ENCODE measurements at regions of chr6 and their contacts with region 1.

Region 1: GRCh38 chr6:13328076-13328874 is at the start of gene TBC1D7:
- DNase-seq: peak; percentile 92
- H3K4me3 Mint-ChIP-seq: peak within 1 kb of the TSS; percentile 88
- H3K27ac Mint-ChIP-seq: peak within 1 kb of the TSS; percentile 79
- H3K4me1 Mint-ChIP-seq: no peaks in the 10 kb centered on the region
- H3K27me3 Mint-ChIP-seq: no peaks in the 10 kb centered on the region
- CTCF ChIP-seq: no peak
- total RNA-seq, gene TBC1D7: 19.5 and 28.5 TPM in 2 replicates

Region 2: DNA sequence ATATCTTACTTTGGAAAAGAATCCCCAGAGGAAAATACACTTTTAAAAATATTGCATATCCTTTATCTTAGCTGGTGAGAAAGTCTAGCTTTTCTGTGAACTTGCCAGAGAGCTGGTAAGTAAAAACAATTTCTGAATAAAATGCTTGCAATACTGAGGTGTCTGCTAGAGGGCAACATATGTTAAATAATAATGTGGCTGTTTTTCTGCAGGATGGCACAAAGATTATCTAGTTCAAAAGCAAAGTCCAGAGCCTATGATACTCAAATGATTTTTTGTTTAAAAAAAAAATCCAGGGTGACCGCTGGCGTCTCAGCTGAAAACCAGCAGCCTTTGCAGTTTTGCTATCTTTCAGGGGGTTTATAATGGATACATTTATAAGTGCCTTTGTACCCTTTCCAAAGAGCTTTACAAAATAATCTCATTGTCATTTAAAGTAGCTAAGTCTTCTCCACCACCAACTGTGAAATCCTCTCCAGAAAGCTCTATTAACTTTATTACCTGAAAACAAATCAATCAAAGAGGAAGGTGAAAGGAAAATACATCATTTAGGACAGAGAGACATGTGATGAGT is 416.8 kb before region 1 on chr6:
- CTCF ChIA-PET with region 1: interaction called, 160 read pairs
- POLR2A ChIA-PET with region 1: interaction called, 6 read pairs
- intact Hi-C with region 1: loop called (anchors 1 kb)
- DNase-seq: peak; percentile 31
- H3K4me3 Mint-ChIP-seq: no peak overlapping the region
- H3K27ac Mint-ChIP-seq: no peak overlapping the region
- H3K4me1 Mint-ChIP-seq: no peaks in the 10 kb centered on the region
- H3K27me3 Mint-ChIP-seq: peaks cover 62% of the 10 kb centered on the region
- CTCF ChIP-seq: peak; percentile 40

Region 3: GRCh38 chr6:13229205-13230085 is 98.8 kb before region 1 on chr6:
- CTCF ChIA-PET with region 1: interaction called, 12 read pairs
- POLR2A ChIA-PET with region 1: interaction called, 5 read pairs
- intact Hi-C with region 1: loop called (anchors 1 kb)
- DNase-seq: peak; percentile 66
- H3K4me3 Mint-ChIP-seq: no peak overlapping the region
- H3K27ac Mint-ChIP-seq: no peak overlapping the region
- H3K4me1 Mint-ChIP-seq: peaks cover 11% of the 10 kb centered on the region
- H3K27me3 Mint-ChIP-seq: no peaks in the 10 kb centered on the region
- CTCF ChIP-seq: peak; percentile 48

Region 4: DNA sequence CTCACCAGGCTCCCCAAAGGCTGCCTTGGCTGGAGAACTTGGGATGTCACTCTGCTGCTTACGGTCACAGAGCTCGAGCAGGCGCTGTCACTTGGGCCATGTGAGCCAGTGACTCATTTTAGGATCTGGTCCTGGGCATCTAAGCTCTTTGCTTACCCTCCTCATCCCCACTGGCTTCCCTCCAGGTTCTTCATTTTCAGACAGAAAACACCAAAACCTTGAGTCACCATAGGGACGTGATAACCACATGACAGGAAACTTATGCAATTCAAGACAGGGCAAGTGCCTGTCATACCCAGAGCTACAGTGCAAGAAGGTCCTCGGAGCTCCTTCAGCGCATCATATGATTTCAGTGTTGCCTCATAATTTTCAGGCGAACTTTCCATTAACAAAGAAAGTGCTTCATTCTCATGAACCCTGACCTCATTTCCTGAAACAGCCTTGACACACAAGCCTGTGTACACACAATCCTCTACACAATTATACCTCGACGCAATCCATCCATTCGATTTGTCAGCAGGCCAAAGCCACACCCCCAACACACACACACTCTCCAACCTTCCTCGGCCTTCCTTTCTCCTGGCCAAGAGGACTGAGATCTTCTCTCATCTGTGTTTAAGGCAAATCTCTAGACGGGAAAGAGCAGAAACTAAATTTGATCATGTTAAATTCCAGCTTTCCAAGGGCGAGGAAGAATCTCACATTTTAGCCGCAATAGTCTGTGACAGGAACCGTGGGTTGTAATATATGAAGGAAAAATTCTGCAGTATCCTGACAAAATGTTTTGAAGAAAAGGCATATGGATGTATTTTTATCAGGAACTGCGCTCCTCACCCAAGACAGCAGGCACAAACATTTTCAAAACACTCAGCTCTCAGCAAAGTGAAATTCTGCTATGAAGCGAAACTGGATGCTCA is 25.3 kb before region 1 on chr6:
- CTCF ChIA-PET with region 1: interaction called, 3 read pairs
- POLR2A ChIA-PET with region 1: interaction called, 15 read pairs
- intact Hi-C with region 1: loop called (anchors 1 kb)
- DNase-seq: peak; percentile 97
- H3K4me3 Mint-ChIP-seq: peak overlapping the region; percentile 5
- H3K27ac Mint-ChIP-seq: peak overlapping the region; percentile 54
- H3K4me1 Mint-ChIP-seq: peaks cover 24% of the 10 kb centered on the region
- H3K27me3 Mint-ChIP-seq: no peaks in the 10 kb centered on the region
- CTCF ChIP-seq: no peak

Region 5: GRCh38 chr6:13478525-13478966 is 150.3 kb after region 1 on chr6:
- CTCF ChIA-PET with region 1: interaction called, 3 read pairs
- POLR2A ChIA-PET with region 1: interaction called, 22 read pairs
- intact Hi-C with region 1: no loop called
- DNase-seq: no peak
- H3K4me3 Mint-ChIP-seq: no peak overlapping the region
- H3K27ac Mint-ChIP-seq: no peak overlapping the region
- H3K4me1 Mint-ChIP-seq: peaks cover 32% of the 10 kb centered on the region
- H3K27me3 Mint-ChIP-seq: no peaks in the 10 kb centered on the region
- CTCF ChIP-seq: no peak

Region 6: DNA sequence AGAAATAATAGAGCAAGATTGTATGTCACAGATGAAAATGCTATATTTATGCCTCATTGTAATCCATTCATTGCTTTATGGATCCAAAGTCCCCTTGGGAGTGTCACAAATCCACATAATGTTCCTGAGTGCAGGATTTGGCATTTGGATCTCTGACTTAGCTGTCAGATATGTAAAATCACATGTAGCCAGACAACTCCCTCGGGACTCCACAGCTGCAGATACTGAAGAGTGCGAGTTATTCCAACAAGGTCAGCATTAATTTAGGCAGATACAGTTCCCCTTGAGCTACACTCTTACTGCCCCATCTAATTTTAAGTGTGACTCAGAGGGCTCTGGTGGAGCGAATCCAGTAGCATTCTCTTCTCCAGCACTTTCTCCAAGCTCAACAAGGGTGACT is 1222.5 kb after region 1 on chr6:
- CTCF ChIA-PET with region 1: no interaction called
- POLR2A ChIA-PET with region 1: no interaction called
- intact Hi-C with region 1: no loop called
- DNase-seq: no peak
- H3K4me3 Mint-ChIP-seq: no peak overlapping the region
- H3K27ac Mint-ChIP-seq: no peak overlapping the region
- H3K4me1 Mint-ChIP-seq: no peaks in the 10 kb centered on the region
- H3K27me3 Mint-ChIP-seq: no peaks in the 10 kb centered on the region
- CTCF ChIP-seq: no peak